GM13977 (cell line): ENCODE measurements at regions of chr7 and their contacts with region 1.

Region 1: DNA sequence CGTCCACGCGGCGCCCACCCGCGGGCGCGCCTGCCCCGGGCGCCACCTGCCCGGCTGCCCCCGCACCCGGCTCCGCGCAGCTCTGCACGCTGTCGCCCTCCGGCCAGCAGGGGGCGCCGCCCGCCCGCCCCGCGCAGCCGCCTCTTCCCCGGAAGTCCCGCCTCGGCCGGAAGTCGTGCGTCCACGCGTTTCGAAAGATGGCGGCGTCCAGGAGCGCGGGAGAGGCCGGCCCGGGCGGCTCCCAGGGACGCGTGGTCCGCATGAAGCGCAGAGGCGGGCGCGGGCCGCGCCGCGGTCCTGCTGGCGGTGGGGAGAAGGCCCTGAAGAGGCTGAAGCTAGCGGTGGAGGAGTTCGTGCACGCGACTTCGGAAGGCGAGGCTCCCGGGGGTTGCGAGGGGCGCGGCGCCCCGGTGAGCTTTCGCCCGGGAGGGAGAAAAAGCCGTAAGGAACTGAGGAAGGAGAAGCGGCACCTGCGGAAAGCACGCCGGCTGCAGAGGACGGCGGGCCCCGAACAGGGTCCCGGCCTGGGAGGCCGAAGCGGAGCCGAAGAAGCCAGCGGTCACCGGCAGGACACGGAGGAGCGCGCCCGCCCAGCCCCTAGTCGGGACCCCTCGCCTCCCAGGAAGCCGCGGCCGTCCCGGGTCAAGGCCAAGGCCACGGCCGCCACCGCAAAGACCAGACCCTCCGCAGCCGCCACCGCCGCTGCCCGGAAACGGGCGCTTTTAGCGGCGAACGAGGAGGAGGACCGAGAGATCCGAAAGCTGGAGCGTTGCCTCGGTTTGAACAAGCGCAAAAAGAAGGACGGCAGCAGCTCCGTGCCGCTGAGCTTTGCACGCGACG is at the start of gene NOM1:
- DNase-seq: peak; percentile 98
- CTCF ChIP-seq: peak; percentile 98

Region 2: DNA sequence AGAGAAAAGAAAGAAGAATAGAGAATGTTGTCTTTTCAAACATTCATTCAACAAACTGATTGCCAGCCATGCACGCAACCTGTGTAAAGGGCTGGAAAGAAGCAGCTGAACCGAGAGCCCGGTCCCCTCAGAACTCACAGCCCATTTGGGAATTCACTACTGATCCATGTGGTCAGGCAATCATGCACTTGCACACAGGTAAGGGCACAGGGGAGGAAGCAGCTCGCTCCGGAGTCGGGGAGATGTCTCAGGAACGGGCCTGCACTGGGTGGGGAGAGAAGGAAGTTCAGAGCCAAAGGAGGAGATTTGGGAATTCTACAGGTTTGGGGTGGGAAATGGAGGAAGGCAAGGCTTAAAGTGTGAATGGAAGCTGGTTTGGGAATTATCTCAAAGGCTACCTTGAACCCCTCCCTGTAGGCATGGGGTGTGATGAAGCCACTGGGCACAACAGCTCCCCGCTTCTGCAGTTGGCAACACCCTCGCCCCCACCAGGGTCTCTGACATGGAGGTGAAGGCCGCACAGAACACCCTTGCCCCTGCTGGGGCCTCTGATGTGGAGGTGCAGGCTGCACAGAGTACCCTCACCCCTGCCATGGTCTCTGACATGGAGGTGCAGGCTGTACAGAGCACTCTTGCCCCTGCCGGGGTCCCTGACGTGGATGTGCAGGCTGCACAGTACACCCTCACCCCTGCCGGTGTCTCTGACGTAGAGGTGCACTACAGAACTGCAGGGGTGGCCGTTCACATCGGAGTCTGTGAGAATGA is 503.6 kb before region 1 on chr7:
- in situ Hi-C with region 1: no loop called
- DNase-seq: no peak
- CTCF ChIP-seq: no peak

Region 3: DNA sequence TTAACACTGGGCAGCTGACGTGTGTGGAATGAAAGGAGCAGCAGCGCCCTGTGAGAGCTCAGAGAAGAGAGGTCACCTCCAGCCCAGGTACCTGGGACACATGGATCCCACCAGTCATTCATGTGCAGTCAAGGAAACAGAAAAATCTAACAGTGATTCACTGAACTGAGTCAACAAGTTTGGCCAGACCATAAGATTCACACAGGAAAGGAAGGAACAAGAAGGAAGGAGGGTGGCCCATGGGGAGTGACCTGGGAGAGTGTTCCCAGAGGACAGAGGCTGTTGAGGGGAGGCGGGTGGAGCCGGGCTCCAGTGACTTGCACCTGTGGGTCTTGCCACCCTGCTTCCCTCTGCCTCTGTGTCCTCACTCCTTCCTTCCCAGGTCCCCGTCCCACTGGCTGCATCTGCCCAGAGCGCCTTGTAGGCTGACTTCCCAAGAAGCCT is 281.6 kb before region 1 on chr7:
- in situ Hi-C with region 1: no loop called
- DNase-seq: no peak
- CTCF ChIP-seq: no peak

Region 4: GRCh38 chr7:157273208-157274093 is 323.7 kb after region 1 on chr7:
- in situ Hi-C with region 1: loop called (anchors 25 kb)
- DNase-seq: peak; percentile 91
- CTCF ChIP-seq: peak; percentile 97